ENCODE measurements at regions of chr2 and their contacts with region 1.

Region 1: DNA sequence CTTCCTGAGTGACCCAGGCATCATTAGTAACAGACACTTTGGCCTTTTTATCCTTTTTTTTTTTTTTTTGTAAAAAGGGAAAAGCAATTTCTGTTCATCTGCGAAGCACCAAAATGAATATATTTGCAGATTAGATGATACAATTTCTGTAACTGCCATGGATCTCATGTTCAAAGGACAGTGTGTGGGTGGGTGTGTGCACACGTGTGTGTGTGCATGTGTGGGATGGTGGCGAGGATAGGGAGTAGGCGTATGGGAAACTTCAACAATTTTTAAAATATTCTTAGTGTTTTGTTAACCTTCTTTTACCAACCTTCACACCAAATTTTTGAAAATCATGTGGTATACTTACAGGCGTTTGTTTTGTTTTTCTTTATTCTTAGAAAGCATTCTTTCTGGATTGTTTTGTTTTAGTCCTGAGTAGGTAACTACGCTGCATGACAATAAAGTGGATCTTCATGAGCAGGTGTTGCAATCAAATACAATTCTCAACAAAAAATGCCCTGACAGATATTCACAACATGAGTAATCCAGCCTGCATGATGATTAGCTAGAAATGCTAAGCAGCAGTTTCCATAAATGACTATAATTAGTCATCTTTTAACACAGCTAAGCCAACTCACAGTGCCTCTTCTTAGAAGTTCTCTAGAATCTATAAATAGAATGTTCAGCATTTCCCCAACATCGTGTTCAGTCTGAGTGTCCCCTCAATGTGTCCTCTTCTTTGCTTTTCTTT is 53.5 kb upstream of the RMDN2 start:
- DNase-seq: peak; percentile 81
- ATAC-seq: peak; percentile 72
- H3K4me3 ChIP-seq: no peak overlapping the region
- H3K27ac ChIP-seq: no peak overlapping the region
- H3K4me1 ChIP-seq: peaks cover 16% of the 10 kb centered on the region
- H3K27me3 ChIP-seq: no peaks in the 10 kb centered on the region
- CTCF ChIP-seq: no peak
- POLR2A ChIP-seq: no peak
- RAD21 ChIP-seq: no peak

Region 2: DNA sequence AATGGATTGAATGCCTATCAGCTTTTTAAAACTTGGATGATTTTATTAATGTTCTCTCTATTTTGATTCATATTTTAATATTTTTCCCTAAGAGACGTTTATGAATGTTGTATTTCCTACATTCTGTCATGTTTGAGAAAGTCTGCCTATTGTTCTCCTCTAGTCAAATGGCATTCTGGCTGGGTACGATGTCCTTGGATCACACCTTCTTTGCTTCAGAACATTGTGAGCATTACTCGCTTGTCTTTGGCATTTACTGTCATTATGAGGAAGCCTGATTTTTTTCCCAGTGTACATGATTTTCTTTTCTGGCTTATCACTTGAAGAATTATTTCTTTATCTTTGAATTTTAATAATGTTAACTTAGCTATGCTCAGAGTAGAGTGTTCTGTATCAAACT is 278.6 kb before region 1 on chr2:
- CTCF ChIA-PET with region 1: no interaction called
- POLR2A ChIA-PET with region 1: interaction called, 11 read pairs
- dilution Hi-C with region 1: no loop called
- in situ Hi-C with region 1: no loop called
- intact Hi-C with region 1: no loop called
- DNase-seq: no peak
- ATAC-seq: no peak
- H3K4me3 ChIP-seq: no peak overlapping the region
- H3K27ac ChIP-seq: no peak overlapping the region
- H3K4me1 ChIP-seq: peaks cover 8% of the 10 kb centered on the region
- H3K27me3 ChIP-seq: no peaks in the 10 kb centered on the region
- CTCF ChIP-seq: no peak
- POLR2A ChIP-seq: no peak
- RAD21 ChIP-seq: no peak